ENCODE measurements at regions of chr12 and their contacts with region 1.

Region 1: GRCh38 chr12:128724468-128725046 is 99.2 kb downstream of the SLC15A4 start:
- DNase-seq: no peak
- H3K4me3 ChIP-seq: no peak overlapping the region
- H3K4me3 Mint-ChIP-seq: no peak overlapping the region
- H3K27ac Mint-ChIP-seq: no peak overlapping the region
- H3K4me1 ChIP-seq: no peaks in the 10 kb centered on the region
- H3K4me1 Mint-ChIP-seq: no peaks in the 10 kb centered on the region
- H3K27me3 ChIP-seq: no peaks in the 10 kb centered on the region
- H3K27me3 Mint-ChIP-seq: no peaks in the 10 kb centered on the region
- CTCF ChIP-seq: no peak

Region 2: DNA sequence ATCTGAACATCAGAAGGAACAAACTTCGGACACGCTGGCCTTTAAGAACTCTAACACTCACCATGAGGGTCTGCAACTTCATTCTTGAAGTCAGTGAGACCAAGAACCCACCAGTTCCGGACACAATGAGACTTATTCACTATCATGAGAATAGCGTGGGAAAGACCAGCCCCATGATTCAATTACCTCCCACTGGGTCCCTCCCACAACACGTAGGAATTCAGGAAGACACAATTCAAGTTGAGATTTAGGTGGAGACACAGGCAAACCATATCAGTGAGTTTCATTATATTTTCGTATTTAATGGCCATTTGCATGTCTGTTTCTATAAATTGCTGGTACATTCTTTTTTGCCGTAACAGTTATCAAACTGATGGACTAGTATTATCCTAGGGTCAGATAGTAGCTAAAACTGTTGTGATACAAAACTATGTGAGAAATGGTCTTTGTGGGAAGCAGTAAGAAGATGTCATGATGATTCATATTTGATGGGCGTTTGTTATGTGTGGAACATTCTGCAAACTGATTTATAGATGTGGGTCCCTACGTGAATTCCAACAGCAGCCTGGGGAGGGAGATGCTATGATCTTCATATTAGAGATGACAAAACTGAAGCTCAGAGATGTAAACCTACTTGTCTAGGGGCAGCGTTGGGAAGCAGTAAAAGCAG is 740.0 kb before region 1 on chr12:
- CTCF ChIA-PET with region 1: no interaction called
- POLR2A ChIA-PET with region 1: no interaction called
- intact Hi-C with region 1: loop called (anchors 5 kb)
- DNase-seq: no peak
- H3K4me3 ChIP-seq: no peak overlapping the region
- H3K4me3 Mint-ChIP-seq: no peak overlapping the region
- H3K27ac Mint-ChIP-seq: no peak overlapping the region
- H3K4me1 ChIP-seq: no peaks in the 10 kb centered on the region
- H3K4me1 Mint-ChIP-seq: no peaks in the 10 kb centered on the region
- H3K27me3 ChIP-seq: no peaks in the 10 kb centered on the region
- H3K27me3 Mint-ChIP-seq: no peaks in the 10 kb centered on the region
- CTCF ChIP-seq: no peak

Region 3: DNA sequence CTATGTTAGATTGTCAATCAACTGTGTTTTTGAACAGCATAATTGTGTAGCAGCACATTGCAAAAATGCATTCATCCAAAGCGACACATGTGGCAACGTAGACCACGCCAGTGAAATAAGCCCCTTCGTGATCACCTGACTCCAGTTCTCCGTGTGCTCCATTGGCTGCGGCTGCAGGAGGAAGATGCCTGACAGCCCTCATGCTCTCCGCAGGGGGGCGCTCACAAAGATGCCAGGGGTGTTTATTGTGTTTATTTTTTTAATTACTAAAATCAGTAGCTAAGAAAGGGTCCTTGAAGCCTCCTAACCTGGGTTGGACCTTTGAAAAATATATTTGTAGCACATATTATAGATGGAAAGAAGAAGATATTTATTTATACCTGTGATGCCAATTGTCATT is 17.1 kb before region 1 on chr12:
- CTCF ChIA-PET with region 1: no interaction called
- POLR2A ChIA-PET with region 1: no interaction called
- intact Hi-C with region 1: no loop called
- DNase-seq: no peak
- H3K4me3 ChIP-seq: no peak overlapping the region
- H3K4me3 Mint-ChIP-seq: no peak overlapping the region
- H3K27ac Mint-ChIP-seq: no peak overlapping the region
- H3K4me1 ChIP-seq: no peaks in the 10 kb centered on the region
- H3K4me1 Mint-ChIP-seq: no peaks in the 10 kb centered on the region
- H3K27me3 ChIP-seq: no peaks in the 10 kb centered on the region
- H3K27me3 Mint-ChIP-seq: no peaks in the 10 kb centered on the region
- CTCF ChIP-seq: no peak

Measured in Caco-2 (cell line).